ENCODE measurements at regions of chr6 and their contacts with region 1.

Region 1: GRCh38 chr6:105087571-105088211 is 92.1 kb downstream of the POPDC3 start:
- DNase-seq: no peak
- H3K4me3 ChIP-seq: no peak overlapping the region
- CTCF ChIP-seq: peak; percentile 54

Region 2: GRCh38 chr6:105121981-105122380 is 34.3 kb after region 1 on chr6:
- CTCF ChIA-PET with region 1: interaction called, 10 read pairs
- POLR2A ChIA-PET with region 1: no interaction called
- DNase-seq: no peak
- H3K4me3 ChIP-seq: no peak overlapping the region
- CTCF ChIP-seq: no peak

Region 3: DNA sequence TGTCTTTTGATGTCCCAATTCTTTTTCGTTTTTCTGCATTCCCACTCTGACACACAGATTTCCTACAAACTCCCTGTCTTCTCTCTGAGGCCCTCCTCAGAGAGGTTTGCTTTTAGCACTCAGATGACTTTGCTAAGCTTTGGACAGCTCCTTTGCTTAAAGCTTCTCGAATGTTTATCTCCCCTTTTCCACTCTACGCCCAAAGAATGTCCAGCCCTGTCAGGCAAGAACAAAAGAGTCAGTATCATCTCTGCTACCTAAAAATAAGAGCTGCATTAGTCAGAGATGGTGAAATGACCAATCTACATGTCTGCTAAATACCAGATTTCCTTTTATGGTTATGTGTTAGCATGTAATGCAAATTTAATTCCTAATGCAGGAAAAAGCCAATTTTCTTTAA is 258.4 kb after region 1 on chr6:
- CTCF ChIA-PET with region 1: interaction called, 11 read pairs
- POLR2A ChIA-PET with region 1: no interaction called
- DNase-seq: no peak
- H3K4me3 ChIP-seq: no peak overlapping the region
- CTCF ChIP-seq: no peak

Region 4: DNA sequence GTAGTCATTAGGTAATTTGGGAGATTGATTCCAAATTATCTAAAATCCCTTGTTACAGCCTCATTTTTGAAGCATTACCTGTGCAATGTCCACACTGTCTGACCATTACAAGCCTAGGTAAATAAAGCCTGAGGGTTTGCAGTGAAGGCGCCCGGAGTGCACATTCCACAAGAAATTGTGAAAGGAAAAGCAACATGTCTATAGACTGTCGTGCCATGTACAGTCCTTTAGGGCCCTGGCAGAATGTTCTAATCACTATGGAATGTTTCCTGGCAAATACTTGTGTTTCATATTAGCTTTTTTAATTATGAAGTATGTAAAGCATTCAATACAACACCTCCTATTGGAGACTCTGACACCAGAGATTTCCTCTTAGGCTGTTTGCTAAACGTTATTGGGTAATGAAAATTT is 286.3 kb after region 1 on chr6:
- CTCF ChIA-PET with region 1: interaction called, 301 read pairs
- POLR2A ChIA-PET with region 1: no interaction called
- DNase-seq: peak; percentile 62
- H3K4me3 ChIP-seq: no peak overlapping the region
- CTCF ChIP-seq: no peak

Region 5: DNA sequence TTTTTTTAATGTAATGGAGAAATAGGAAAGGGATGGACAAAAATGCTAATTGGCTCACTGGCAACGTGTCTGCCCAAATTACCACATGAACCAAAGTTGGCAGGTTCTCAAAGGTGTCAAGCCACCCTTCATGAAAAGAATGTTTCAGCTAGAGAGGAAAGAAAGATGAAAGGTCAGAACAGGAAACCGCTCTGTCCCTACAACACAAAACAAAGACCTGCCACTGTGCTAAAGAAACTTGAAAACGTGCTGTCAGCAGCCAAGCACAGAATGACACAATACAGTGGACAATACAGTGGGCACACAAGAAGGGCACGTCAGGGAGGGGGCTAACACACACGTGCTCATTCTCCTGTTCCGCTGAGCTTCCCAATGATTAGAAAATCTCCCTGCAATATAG is 310.3 kb after region 1 on chr6:
- CTCF ChIA-PET with region 1: interaction called, 67 read pairs
- POLR2A ChIA-PET with region 1: interaction called, 5 read pairs
- DNase-seq: no peak
- H3K4me3 ChIP-seq: no peak overlapping the region
- CTCF ChIP-seq: no peak

Region 6: GRCh38 chr6:105424175-105424783 is 336.6 kb after region 1 on chr6:
- CTCF ChIA-PET with region 1: interaction called, 44 read pairs
- POLR2A ChIA-PET with region 1: no interaction called
- DNase-seq: no peak
- H3K4me3 ChIP-seq: no peak overlapping the region
- CTCF ChIP-seq: peak; percentile 61